Left lung (tissue), 14 donors: ENCODE measurements at regions of chr5 and their contacts with region 1.

Region 1: DNA sequence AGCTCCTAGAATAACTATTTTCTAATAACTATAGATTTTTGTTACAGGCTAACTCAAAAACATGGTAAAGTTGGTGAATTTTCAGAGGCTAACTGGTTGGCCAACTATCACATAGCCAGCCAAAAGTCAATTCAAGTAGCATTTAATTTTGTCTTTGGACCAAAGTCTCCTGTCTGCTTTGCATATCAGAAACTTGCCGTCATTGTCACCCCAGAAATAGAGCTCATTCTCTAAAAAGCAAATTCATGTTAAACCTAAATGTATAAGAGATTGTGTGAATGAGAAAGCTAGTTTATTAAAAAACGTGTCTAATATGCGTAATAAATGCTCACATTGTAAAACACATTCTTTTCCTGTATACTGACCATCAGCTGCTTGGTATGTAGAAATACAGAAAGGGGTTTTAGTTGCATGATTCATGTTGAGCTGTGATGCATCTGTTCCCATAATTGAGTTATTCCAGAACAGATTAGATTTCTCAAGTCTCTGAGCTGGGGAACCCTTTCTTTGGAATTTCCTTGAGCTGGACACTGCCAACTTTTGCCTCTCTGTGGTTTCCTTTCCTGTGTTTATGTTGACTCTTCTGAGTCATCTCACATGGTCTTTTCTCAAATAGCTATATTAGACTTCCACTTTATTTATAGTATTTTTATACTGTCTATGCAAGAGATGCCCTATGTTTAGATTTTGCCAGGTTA is 7.3 kb downstream of the SRFBP1 start:
- DNase-seq: peak in 1 of 4 donors; percentile 75
- ATAC-seq: peak; percentile 94
- H3K4me3 ChIP-seq: no peak overlapping the region
- H3K27ac ChIP-seq: peak overlapping the region; percentile 72 to 75
- H3K4me1 ChIP-seq: peaks cover 16 to 45% of the 10 kb centered on the region in 2 donors
- H3K27me3 ChIP-seq: no peaks in the 10 kb centered on the region
- CTCF ChIP-seq: no peak

Region 2: DNA sequence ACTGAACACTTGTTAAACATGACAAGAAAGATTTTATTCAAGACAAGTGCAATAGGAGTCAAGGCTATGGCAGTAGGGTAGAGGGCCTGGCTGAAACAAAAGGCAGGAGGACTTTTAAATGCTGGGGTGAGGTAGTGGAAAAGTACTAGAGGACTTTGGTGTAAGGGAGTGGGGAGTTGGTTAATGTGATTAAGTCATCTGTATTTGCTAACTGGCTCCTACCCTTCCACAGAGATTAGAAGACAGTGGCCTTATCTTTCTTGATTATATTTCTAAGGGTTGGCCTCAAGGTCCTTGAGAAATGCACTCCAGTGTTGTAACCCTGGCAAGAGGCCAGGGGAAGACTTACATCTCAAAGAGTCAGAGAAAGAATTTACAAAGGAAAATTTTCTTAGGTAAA is 277.6 kb before region 1 on chr5:
- intact Hi-C with region 1: no loop called
- DNase-seq: peak in 1 of 4 donors; percentile 30
- ATAC-seq: peak; percentile 86
- H3K4me3 ChIP-seq: no peak overlapping the region
- H3K27ac ChIP-seq: no peak overlapping the region
- H3K4me1 ChIP-seq: no peaks in the 10 kb centered on the region
- H3K27me3 ChIP-seq: no peaks in the 10 kb centered on the region
- CTCF ChIP-seq: no peak

Region 3: DNA sequence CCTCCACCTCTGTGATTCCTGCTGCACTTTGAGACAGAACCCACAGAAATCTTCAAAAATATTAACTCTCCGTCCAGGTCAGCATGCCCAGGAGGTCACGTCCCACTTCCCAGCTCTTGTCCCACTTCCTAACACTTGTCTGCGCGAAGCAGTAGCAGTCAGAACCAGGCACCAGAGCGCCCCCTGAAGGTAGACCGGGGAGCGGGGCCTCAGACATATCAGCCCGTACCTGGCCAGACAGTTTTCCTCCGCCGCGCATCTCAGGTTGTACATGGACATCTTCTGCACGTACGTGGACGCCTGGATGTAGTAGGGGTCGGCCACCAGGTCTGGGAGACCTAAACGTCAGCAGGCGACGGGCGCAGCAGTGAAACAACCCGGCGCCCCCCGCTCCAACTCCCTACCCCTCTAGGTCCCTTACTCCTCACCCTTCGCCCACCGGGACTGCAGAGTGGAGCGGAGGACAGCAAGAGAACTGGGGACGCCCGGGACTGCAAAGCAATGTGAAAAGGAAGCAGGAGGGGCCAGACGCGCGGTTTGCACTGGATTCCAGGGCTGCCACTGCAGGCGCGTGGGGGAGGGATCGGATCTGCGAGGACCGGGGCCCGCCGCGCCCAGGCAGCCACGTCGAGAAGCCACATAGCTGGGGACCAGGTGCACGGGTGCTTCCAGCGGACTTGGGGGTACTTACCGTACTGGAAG is 107.8 kb after region 1 on chr5:
- intact Hi-C with region 1: loop called in 1 of 2 experiments (anchors 10 kb)
- DNase-seq: peak; percentile 72 to 86 (median 86)
- ATAC-seq: peak; percentile 89
- H3K4me3 ChIP-seq: peak overlapping the region; percentile 48 to 58
- H3K27ac ChIP-seq: peak overlapping the region; percentile 55 to 89
- H3K4me1 ChIP-seq: peaks cover 0 to 20% of the 10 kb centered on the region in 2 donors
- H3K27me3 ChIP-seq: peaks cover 5 to 39% of the 10 kb centered on the region in 2 donors
- CTCF ChIP-seq: peak; percentile 49 to 72